GM12878 (cell line): ENCODE measurements at regions of chr11 and their contacts with region 1.

Region 1: GRCh38 chr11:114262681-114263512 is 33.3 kb upstream of the NNMT start:
- DNase-seq: no peak
- ATAC-seq: no peak; the same call in 2 of the 3 replicates
- H3K4me3 ChIP-seq: no peak overlapping the region
- H3K27ac ChIP-seq: no peak overlapping the region
- H3K4me1 ChIP-seq: no peaks in the 10 kb centered on the region
- H3K27me3 ChIP-seq: peaks cover 0 to 7% of the 10 kb centered on the region in 2 experiments; a peak in 2 of 4 replicates
- CTCF ChIP-seq: peak; percentile 27 to 39 (median 34); a peak in 4 of 6 replicates
- EP300 ChIP-seq: no peak
- POLR2A ChIP-seq: no peak
- RAD21 ChIP-seq: peak; percentile 58

Region 2: GRCh38 chr11:113305440-113306336 is 957.2 kb before region 1 on chr11:
- CTCF ChIA-PET with region 1: interaction called, 3 read pairs
- POLR2A ChIA-PET with region 1: no interaction called
- RAD21 ChIA-PET with region 1: no interaction called
- SMC1A ChIA-PET with region 1: interaction called, 3 read pairs
- in situ Hi-C with region 1: loop called (anchors 10 kb)
- intact Hi-C with region 1: loop called (anchors 5 kb)
- DNase-seq: no peak
- ATAC-seq: peak; percentile 99
- H3K4me3 ChIP-seq: no peak overlapping the region
- H3K27ac ChIP-seq: no peak overlapping the region
- H3K4me1 ChIP-seq: no peaks in the 10 kb centered on the region
- H3K27me3 ChIP-seq: no peaks in the 10 kb centered on the region; a peak in 1 of 4 replicates
- CTCF ChIP-seq: peak; percentile 92 to 97 (median 95); a peak in 5 of 6 replicates
- EP300 ChIP-seq: no peak
- POLR2A ChIP-seq: no peak
- RAD21 ChIP-seq: peak; percentile 97

Region 3: GRCh38 chr11:113806406-113806805 is 456.5 kb before region 1 on chr11:
- CTCF ChIA-PET with region 1: interaction called, 14 read pairs
- POLR2A ChIA-PET with region 1: no interaction called
- RAD21 ChIA-PET with region 1: interaction called, 7 read pairs
- SMC1A ChIA-PET with region 1: interaction called, 7 read pairs
- in situ Hi-C with region 1: loop called (anchors 10 kb)
- intact Hi-C with region 1: loop called (anchors 5 kb)
- DNase-seq: no peak
- ATAC-seq: peak; percentile 83
- H3K4me3 ChIP-seq: no peak overlapping the region
- H3K27ac ChIP-seq: no peak overlapping the region
- H3K4me1 ChIP-seq: no peaks in the 10 kb centered on the region
- H3K27me3 ChIP-seq: no peaks in the 10 kb centered on the region
- CTCF ChIP-seq: peak; percentile 51 to 67 (median 55)
- EP300 ChIP-seq: no peak
- POLR2A ChIP-seq: no peak
- RAD21 ChIP-seq: peak; percentile 53

Region 4: DNA sequence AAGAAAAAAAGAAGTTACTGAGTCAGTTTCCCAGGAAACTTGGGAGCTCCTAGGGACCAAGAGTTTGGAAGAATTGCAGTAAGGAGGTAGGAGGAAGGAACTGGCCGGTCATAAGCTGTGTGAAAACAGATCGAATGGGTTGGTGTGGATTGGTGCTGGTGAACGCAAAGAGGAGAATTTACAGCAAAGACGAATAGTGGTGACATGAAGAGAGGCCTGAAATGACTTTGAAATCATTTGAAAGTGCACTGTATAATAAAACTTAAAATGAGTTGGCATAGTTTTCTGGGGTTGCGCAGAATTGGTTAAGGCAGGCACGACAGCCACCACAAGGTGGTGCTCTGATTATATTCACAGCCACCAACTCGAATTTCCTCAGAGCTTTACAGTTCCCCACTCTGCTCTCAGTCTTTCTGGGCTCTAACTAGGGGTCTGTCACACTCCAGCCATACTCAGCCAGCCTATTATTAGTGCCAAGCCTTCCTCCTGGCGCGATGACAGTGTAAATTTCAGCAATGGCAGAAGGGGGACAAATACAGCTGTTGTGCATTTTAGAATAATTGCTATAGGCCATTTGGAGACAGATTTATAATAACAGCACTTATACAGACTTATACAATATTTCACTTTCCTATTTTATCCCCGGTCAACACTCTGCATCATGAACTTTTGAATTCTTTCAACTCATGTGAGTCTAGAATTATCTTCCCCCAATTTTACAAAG is 366.6 kb before region 1 on chr11:
- CTCF ChIA-PET with region 1: interaction called, 120 read pairs
- POLR2A ChIA-PET with region 1: no interaction called
- RAD21 ChIA-PET with region 1: interaction called, 17 read pairs
- SMC1A ChIA-PET with region 1: interaction called, 40 read pairs
- in situ Hi-C with region 1: loop called (anchors 5 kb)
- intact Hi-C with region 1: loop called (anchors 1 kb)
- DNase-seq: no peak
- ATAC-seq: peak; percentile 91
- H3K4me3 ChIP-seq: no peak overlapping the region
- H3K27ac ChIP-seq: no peak overlapping the region
- H3K4me1 ChIP-seq: peaks cover 10% of the 10 kb centered on the region
- H3K27me3 ChIP-seq: peaks cover 0 to 2% of the 10 kb centered on the region in 2 experiments; a peak in 1 of 4 replicates
- CTCF ChIP-seq: peak; percentile 72 to 79 (median 76)
- EP300 ChIP-seq: no peak
- POLR2A ChIP-seq: no peak
- RAD21 ChIP-seq: peak; percentile 59

Region 5: DNA sequence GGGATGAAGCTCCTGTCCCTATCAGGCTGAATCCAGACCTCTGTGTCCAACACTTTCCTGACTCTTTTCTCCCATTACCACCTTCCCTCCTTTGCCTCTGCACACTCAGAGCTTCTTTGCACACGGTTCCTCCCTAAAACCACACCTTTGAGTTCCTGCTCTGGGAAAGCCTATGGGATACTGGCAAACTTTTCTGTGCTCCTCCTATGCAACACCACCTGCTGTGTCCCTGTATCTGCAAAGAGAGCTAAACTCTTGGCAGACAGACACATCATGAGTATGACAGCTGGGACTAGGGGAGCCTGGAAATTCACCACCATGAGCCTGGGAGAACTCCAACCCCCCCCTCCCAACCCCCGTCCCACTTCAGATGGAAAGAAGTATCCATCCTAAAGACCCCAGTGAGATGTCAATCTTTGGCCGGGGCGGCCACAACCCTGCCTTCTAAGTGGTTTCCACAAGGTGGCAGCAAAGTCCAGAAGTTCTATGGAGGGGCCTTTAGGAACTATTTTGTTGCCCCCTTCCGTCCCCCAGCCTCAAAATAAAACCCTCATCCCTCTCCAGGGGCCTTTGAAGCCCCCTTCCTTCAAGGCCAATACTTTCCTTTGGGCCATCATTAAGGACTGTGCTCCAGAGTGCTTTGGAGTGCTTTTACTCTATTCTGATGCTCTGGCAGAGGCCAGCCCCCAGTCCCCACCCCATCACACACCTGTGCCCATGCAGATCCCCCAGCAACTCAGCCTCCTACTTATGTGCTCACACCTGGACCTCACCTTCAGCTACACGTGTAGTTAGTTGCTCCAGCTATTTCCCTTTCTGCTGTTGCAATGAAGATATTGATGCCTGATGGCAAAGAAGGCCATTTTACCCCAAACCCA is 268.6 kb before region 1 on chr11:
- CTCF ChIA-PET with region 1: interaction called, 83 read pairs
- POLR2A ChIA-PET with region 1: no interaction called
- RAD21 ChIA-PET with region 1: interaction called, 16 read pairs
- SMC1A ChIA-PET with region 1: interaction called, 7 read pairs
- in situ Hi-C with region 1: loop called (anchors 5 kb)
- intact Hi-C with region 1: loop called (anchors 1 kb)
- DNase-seq: no peak
- ATAC-seq: peak; percentile 53; the same call in 2 of the 3 replicates
- H3K4me3 ChIP-seq: no peak overlapping the region
- H3K27ac ChIP-seq: no peak overlapping the region
- H3K4me1 ChIP-seq: no peaks in the 10 kb centered on the region
- H3K27me3 ChIP-seq: no peaks in the 10 kb centered on the region; a peak in 1 of 4 replicates
- CTCF ChIP-seq: peak; percentile 54 to 61 (median 55)
- EP300 ChIP-seq: no peak
- POLR2A ChIP-seq: no peak
- RAD21 ChIP-seq: peak; percentile 65

Region 6: DNA sequence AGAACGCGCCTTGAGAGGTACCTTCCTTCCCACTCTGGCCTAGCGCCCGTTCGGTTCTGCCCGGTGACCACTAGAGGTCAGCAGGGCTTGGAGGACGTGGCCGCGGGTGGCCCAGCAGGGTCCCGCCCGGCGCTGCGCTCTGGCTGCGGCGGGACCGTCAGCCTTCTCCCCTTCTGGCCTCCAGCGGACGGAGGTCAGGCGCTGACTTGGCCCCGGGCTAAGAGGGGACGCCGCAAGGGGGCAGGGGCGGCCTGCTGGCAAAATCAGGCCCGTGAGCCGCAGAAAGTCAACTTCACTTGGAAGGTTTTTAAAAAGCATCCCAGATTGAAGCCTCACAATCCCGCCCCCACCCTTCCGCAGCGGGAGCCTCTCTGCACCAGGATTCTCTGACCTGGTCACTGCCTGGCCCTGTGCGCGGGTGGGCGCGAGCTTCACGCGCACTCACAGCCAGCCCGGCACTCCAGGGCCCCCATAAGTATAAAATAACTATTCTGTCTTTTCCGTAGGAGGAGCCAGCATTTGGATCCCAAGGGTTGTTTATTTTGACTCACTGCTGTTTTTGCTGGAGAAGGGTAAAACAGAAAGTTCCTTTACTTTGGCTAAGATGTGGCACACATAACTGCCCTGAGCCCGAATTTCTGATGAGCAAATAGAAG is 226.6 kb before region 1 on chr11:
- CTCF ChIA-PET with region 1: interaction called, 7 read pairs
- POLR2A ChIA-PET with region 1: no interaction called
- RAD21 ChIA-PET with region 1: no interaction called
- SMC1A ChIA-PET with region 1: no interaction called
- in situ Hi-C with region 1: no loop called
- intact Hi-C with region 1: loop called (anchors 5 kb)
- DNase-seq: no peak
- ATAC-seq: peak; percentile 80
- H3K4me3 ChIP-seq: no peak overlapping the region
- H3K27ac ChIP-seq: no peak overlapping the region
- H3K4me1 ChIP-seq: no peaks in the 10 kb centered on the region
- H3K27me3 ChIP-seq: no peaks in the 10 kb centered on the region; a peak in 1 of 4 replicates
- CTCF ChIP-seq: peak; percentile 26 to 52 (median 36)
- EP300 ChIP-seq: no peak
- POLR2A ChIP-seq: no peak
- RAD21 ChIP-seq: 0 out of 2 replicates have a peak, but pooled peaks have one; percentile 22

Region 7: DNA sequence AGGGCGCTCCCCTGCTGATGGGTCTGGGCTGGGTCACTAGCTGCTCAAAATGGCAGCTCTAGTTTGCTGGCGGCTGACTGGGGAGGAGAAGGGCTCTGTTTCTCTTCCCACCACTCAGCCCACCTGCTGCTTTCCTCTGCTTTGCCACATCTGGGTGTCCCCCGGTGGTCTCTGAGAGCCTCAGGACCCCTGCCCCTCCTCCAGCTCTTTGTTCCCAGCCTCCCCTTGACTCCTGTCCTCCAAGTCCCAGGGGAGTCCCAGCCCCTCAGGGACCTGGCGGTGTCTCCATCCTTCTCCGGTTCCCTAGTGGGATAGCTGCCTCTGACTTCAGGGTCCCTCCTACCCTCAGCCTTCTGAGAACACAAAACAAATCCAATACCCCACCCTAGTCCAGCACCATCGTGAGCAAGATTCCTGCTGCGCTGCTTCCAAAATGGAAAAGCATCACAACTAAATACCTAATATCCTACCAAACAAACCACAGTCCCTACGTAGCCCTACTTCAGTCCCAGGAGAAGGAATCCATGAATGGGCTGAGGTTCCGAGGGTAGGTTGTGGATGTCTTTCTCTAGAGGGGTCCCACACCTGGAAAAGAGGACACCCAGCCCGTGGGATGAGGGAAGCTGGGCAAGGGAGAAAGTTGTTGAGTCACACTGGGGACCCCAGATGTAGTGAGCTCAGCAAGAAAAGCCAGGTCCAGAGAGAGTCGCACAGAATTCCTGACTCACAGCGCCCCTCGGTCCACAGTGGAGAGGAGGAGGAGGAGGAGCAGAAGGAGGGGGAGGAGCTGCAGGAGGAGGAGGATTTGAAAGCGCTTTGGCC is 11.7 kb before region 1 on chr11:
- CTCF ChIA-PET with region 1: interaction called, 10 read pairs
- POLR2A ChIA-PET with region 1: no interaction called
- RAD21 ChIA-PET with region 1: no interaction called
- SMC1A ChIA-PET with region 1: interaction called, 4 read pairs
- in situ Hi-C with region 1: no loop called
- intact Hi-C with region 1: no loop called
- DNase-seq: no peak
- ATAC-seq: no peak
- H3K4me3 ChIP-seq: no peak overlapping the region
- H3K27ac ChIP-seq: no peak overlapping the region
- H3K4me1 ChIP-seq: no peaks in the 10 kb centered on the region
- H3K27me3 ChIP-seq: no peaks in the 10 kb centered on the region; a peak in 1 of 4 replicates
- CTCF ChIP-seq: no peak
- EP300 ChIP-seq: no peak
- POLR2A ChIP-seq: no peak
- RAD21 ChIP-seq: no peak